Ascending aorta (tissue), 2 donors: ENCODE measurements at regions of chr17 and their contacts with region 1.

Region 1: DNA sequence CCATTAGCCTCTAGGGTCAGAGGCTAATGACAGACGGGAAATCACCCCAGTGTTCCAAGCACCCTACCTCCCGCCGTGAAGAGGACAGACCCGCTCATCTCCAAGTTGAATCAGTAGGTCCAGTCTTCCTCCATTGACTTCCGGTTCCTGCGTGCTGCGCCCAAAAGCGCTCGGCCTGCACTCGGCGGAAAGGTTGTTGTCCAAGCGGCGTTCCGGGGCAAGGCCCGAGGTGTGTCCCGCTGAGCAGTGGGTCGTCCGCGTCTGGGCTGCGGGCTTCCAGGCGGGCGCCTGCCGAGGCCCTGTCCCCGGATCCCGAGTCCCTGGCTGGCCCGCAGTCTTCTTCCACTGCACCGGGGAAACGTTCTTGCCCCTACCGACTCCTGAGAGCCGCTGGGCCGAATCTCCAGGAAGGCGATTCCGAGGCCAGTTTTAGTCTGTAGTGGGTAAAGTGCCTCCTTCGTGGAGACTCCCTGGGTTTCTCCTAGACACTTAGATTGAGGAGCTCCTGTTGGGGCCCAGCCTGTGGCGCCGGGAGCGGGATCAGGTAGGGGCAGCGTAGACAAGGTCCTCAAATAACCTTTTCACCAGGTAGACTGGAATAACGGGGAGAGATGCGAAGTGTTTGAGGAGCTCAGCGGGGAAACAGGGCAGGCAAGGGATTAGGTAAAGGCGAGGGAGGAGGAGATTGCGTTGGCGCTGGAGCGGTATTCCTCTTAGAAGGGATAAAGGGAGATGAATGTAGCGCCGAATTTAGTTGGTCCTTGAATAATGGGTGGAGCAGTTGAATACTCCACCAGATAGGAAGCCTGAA is at the start of gene TEFM:
- DNase-seq: peak; percentile 62 to 93
- H3K4me3 ChIP-seq: peak within 1 kb of the TSS; percentile 59 to 78
- H3K27ac ChIP-seq: peak within 1 kb of the TSS; percentile 75 to 90
- H3K4me1 ChIP-seq: peaks cover 0 to 13% of the 10 kb centered on the region in 2 donors
- H3K27me3 ChIP-seq: no peaks in the 10 kb centered on the region
- CTCF ChIP-seq: no peak
- total RNA-seq, gene TEFM: 0.43 TPM

Region 2: DNA sequence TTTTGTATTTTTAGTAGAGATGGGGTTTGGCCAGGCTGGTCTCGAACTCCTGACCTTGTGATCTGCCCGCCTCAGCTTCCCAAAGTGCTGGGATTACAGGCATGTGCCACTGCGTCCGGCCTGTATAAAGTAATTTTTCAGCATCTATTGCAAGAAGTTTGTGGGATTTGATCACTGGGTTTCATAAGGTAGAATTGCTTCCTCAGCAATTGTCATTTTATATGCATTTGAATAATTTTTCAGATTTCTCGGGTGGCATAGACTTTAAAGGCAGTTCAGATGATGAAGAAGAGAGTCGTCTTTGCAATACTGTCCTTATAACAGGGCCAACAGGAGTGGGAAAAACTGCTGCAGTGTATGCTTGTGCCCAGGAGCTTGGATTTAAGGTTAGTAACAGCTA is 37.3 kb before region 1 on chr17:
- intact Hi-C with region 1: no loop called
- DNase-seq: no peak
- H3K4me3 ChIP-seq: no peak overlapping the region
- H3K27ac ChIP-seq: no peak overlapping the region
- H3K4me1 ChIP-seq: no peaks in the 10 kb centered on the region
- H3K27me3 ChIP-seq: no peaks in the 10 kb centered on the region
- CTCF ChIP-seq: no peak

Region 3: DNA sequence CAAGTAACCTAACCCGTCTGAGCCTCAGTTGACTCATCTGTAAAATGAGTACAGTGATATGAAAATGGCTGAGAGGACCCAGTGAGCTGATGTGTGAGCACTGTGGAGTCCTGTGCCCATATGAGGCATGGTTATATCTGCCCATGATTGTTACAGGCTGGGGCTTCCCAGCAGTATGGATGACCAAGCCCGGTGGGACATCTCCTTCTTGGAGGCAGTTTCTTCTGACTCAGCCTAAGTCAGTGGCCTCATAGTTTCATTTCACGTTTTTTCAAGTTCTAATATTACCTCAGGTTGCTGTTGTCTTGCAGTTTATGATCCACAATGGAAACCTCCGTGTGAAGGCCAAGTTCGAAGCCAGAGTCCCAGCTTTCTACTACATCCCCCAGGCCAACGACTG is 20.2 kb after region 1 on chr17:
- intact Hi-C with region 1: no loop called
- DNase-seq: no peak
- H3K4me3 ChIP-seq: no peak overlapping the region
- H3K27ac ChIP-seq: no peak overlapping the region
- H3K4me1 ChIP-seq: peaks cover 0 to 3% of the 10 kb centered on the region in 2 donors
- H3K27me3 ChIP-seq: peaks cover under 1% of the 10 kb centered on the region
- CTCF ChIP-seq: no peak

Region 4: DNA sequence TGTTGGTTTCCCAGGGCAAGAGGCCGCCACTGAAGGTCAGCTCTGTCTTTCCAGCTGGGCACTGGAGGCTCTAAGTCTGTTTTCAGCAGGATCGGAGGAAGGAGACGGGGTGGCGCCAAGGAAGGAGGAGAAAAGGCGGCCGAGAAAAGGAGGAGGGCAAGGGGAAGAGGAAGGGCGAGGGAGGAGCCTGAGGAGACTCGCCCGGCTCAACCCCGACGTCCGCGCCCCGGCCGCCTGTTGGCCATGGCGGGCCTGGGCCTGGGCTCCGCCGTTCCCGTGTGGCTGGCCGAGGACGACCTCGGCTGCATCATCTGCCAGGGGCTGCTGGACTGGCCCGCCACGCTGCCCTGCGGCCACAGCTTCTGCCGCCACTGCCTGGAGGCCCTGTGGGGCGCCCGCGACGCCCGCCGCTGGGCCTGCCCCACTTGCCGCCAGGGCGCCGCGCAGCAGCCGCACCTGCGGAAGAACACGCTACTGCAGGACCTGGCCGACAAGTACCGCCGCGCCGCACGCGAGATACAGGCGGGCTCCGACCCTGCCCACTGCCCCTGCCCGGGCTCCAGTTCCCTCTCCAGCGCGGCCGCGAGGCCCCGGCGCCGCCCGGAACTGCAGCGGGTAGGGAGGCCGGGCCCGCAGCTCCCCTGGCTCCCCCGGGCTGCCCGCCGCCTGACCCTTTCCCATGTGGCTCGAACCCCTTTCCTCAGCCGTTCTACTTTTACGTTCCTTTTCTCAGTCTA is 64.7 kb after region 1 on chr17 and contains the start of gene RNF135:
- intact Hi-C with region 1: loop called (anchors 2 kb)
- DNase-seq: peak; percentile 37 to 89
- H3K4me3 ChIP-seq: peak within 1 kb of the TSS; percentile 79 to 87
- H3K27ac ChIP-seq: peak within 1 kb of the TSS; percentile 91 to 94
- H3K4me1 ChIP-seq: peaks cover 0 to 3% of the 10 kb centered on the region in 2 donors
- H3K27me3 ChIP-seq: no peaks in the 10 kb centered on the region
- CTCF ChIP-seq: peak in 2 of 3 experiments; percentile 29 to 73
- total RNA-seq, gene RNF135: 4.6 TPM

Region 5: DNA sequence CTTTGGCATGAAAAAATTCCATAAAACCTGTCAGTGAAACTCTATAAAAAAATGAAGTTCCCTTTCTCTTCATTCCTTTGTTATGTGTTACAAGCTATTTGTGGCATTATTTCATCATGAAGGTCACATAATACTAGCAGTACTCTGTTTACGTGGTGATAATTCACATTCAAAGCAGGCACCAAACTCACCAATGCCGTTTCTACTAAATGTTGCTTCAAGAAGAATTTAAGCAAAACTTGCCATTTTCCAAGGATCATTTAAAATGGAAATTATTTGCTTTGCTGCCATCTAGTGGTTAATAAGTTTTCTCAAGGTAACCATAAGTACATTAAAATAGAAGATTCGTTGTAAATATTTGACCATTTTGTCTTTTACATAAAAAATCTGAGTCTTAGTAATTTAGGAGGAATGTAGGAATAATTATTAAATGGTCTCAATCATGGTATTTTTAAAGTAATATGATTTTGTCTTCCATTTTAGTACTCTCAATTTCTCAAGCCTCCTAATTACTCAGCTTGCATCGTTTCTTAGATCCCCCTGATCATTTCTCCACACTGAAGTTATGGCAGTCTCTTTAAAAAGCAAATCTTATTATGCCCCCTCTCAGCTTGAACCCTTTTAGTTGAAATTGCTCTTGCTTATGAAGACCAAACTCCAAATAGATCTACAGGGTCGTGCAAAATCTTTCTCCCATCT is 309.9 kb after region 1 on chr17:
- intact Hi-C with region 1: loop called (anchors 1 kb)
- DNase-seq: no peak
- H3K4me3 ChIP-seq: no peak overlapping the region
- H3K27ac ChIP-seq: peak overlapping the region; percentile 47 to 74
- H3K4me1 ChIP-seq: peaks cover 0 to 8% of the 10 kb centered on the region in 2 donors
- H3K27me3 ChIP-seq: no peaks in the 10 kb centered on the region
- CTCF ChIP-seq: peak; percentile 41 to 64 (median 48)